ENCODE measurements at regions of chr10 and their contacts with region 1.

Region 1: GRCh38 chr10:72337020-72337629 is 17.6 kb downstream of the DNAJB12 start:
- DNase-seq: peak; percentile 93
- H3K4me3 Mint-ChIP-seq: peak overlapping the region; percentile 72
- H3K27ac Mint-ChIP-seq: peak overlapping the region; percentile 79
- H3K4me1 Mint-ChIP-seq: peaks cover 42% of the 10 kb centered on the region
- H3K27me3 Mint-ChIP-seq: no peaks in the 10 kb centered on the region
- CTCF ChIP-seq: peak; percentile 96

Region 2: DNA sequence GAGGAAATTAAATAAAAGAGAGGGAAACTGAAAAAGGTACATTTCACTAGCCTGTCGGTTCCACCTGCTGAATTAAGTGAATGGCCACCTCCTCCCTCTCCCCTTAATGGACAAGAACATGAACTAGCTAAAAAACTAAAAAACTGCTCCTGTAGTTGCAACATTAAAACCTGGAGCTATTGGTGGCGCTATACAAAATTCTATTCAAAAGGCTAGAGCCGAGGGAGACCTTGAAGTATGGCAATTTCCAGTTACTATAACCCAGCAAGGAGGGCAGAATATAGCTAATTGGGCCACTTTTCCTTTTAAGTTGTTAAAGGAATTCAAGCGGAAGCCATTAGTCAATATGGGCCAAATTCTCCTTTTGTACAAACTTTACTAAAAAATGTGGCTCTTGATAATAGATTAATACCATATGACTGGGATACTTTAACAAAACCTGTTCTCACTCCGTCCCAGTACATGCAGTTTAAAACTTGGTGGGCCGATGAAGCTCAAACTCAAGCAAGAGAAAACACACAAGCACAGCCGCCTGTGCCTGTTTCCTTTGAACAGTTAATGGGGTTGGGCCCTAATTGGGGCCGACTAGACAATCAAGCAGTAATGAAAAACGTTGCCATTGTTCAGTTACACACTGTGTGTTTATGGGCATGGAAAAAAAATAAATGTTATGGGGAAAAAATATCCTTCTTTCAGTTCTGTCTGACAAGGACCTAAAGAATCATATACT is 379.4 kb before region 1 on chr10:
- CTCF ChIA-PET with region 1: interaction called, 6 read pairs
- POLR2A ChIA-PET with region 1: no interaction called
- intact Hi-C with region 1: loop called (anchors 2 kb)
- DNase-seq: no peak
- H3K4me3 Mint-ChIP-seq: no peak overlapping the region
- H3K27ac Mint-ChIP-seq: no peak overlapping the region
- H3K4me1 Mint-ChIP-seq: peaks cover 10% of the 10 kb centered on the region
- H3K27me3 Mint-ChIP-seq: no peaks in the 10 kb centered on the region
- CTCF ChIP-seq: no peak

Region 3: DNA sequence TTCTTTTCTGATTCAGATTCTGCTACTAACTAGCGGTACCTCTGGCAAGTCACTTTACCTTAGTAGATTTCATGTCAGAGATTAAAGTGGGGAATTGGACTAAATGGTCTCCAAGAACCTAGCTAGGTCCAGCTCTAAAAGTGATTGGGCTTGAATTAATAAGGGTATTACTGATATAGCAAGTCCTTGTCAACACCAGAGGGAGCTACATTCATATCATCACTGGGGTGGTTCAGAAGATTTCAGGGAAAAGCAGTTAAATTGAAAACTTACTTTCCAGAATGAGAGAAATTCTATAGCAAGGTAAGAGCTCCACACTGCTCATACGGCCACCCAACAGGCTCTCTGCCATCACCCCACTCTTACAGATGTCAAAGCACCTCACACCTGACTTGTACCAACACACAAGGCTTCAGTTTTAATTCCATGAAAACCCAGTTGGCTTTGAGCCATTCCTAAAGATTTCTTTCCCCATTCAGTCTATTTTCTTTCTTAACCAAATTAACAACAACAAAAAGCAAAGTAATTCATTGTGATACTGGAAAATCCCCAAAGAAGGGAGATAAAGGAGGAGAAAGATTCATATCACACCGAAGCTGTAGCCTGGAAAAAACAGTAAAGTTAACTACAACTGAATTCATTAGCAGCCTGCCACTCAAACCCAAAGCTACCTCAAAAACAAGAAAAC is 210.8 kb before region 1 on chr10:
- CTCF ChIA-PET with region 1: interaction called, 42 read pairs
- POLR2A ChIA-PET with region 1: interaction called, 5 read pairs
- intact Hi-C with region 1: loop called (anchors 1 kb)
- DNase-seq: peak; percentile 59
- H3K4me3 Mint-ChIP-seq: no peak overlapping the region
- H3K27ac Mint-ChIP-seq: no peak overlapping the region
- H3K4me1 Mint-ChIP-seq: no peaks in the 10 kb centered on the region
- H3K27me3 Mint-ChIP-seq: no peaks in the 10 kb centered on the region
- CTCF ChIP-seq: peak; percentile 31

Region 4: GRCh38 chr10:72223743-72224101 is 113.4 kb before region 1 on chr10:
- CTCF ChIA-PET with region 1: interaction called, 26 read pairs
- POLR2A ChIA-PET with region 1: interaction called, 20 read pairs
- intact Hi-C with region 1: loop called (anchors 2 kb)
- DNase-seq: no peak
- H3K4me3 Mint-ChIP-seq: no peak overlapping the region
- H3K27ac Mint-ChIP-seq: peak overlapping the region; percentile 23
- H3K4me1 Mint-ChIP-seq: peaks cover 12% of the 10 kb centered on the region
- H3K27me3 Mint-ChIP-seq: no peaks in the 10 kb centered on the region
- CTCF ChIP-seq: no peak

Region 5: DNA sequence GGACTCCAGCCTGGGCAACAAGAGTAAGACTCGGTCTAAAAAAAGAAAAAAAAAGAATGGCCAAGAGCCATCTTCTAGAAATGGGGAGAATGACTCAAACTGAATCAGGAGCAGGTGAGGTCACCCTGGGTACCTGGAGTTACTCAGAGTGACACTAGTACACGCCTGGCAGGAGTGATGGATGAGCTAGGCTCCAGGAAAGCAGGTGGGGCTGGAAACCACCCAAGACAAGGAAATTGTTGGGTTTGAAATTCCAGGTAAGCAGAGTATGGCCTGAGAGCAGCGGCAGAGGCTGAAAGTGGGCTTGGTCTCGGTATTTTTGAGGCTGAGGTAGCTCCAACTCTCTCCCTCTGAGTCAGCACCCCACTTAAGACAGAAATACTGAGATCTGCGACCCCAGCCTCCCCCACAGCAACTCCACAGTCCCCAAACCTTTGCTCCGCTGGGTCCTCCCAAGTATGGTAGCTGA is 44.9 kb before region 1 on chr10:
- CTCF ChIA-PET with region 1: interaction called, 4 read pairs
- POLR2A ChIA-PET with region 1: interaction called, 20 read pairs
- intact Hi-C with region 1: no loop called
- DNase-seq: peak; percentile 96
- H3K4me3 Mint-ChIP-seq: no peak overlapping the region
- H3K27ac Mint-ChIP-seq: peak overlapping the region; percentile 57
- H3K4me1 Mint-ChIP-seq: peaks cover 18% of the 10 kb centered on the region
- H3K27me3 Mint-ChIP-seq: no peaks in the 10 kb centered on the region
- CTCF ChIP-seq: no peak

Region 6: GRCh38 chr10:72348282-72348681 is 11.2 kb after region 1 on chr10:
- CTCF ChIA-PET with region 1: interaction called, 16 read pairs
- POLR2A ChIA-PET with region 1: interaction called, 14 read pairs
- intact Hi-C with region 1: no loop called
- DNase-seq: no peak
- H3K4me3 Mint-ChIP-seq: no peak overlapping the region
- H3K27ac Mint-ChIP-seq: no peak overlapping the region
- H3K4me1 Mint-ChIP-seq: peaks cover 23% of the 10 kb centered on the region
- H3K27me3 Mint-ChIP-seq: no peaks in the 10 kb centered on the region
- CTCF ChIP-seq: no peak

Region 7: DNA sequence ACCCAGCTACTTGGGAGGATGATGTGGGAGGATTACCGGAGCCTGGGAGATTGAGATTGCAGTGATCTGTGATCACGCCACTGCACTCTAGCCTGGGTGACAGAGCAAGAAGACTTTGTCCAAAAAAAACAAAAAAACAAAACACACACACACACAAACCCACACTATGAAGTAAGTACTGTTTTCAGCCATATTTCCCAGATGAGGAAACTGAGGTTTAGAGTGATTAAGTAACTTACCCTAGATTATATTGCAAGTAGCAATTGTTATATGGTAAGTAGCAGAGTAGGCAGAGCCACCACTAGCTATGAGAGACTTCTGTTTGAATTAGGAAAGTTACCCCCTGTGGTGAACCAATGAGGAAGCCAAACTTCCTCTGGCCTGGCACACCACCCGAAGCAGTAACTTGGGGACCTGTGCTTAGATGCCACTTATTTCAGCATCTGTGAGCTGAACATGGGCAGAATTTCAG is 416.7 kb after region 1 on chr10:
- CTCF ChIA-PET with region 1: no interaction called
- POLR2A ChIA-PET with region 1: no interaction called
- intact Hi-C with region 1: no loop called
- DNase-seq: no peak
- H3K4me3 Mint-ChIP-seq: no peak overlapping the region
- H3K27ac Mint-ChIP-seq: peak overlapping the region; percentile 31
- H3K4me1 Mint-ChIP-seq: peaks cover 6% of the 10 kb centered on the region
- H3K27me3 Mint-ChIP-seq: no peaks in the 10 kb centered on the region
- CTCF ChIP-seq: no peak